Lower leg skin (tissue), 4 donors: ENCODE measurements at regions of chr3 and their contacts with region 1.

Region 1: DNA sequence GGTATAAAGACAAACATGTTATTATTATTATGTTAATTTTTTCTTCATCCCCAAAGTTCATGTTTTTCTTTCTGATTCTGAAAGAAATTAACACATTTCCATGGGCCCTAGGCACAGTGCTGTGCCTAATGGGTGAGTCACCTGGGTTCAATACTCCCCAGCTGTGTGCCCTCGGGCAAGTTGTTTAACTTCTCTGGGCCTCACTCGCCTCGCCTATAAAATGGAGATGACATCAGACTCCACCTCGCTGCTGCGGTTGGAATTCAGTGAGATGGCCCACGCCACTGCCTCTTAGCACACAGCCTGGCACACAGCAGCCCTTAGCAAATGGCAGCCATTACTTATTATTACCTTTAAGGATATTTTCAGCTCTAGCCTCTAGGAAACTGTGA is 22.6 kb downstream of the DNASE1L3 start:
- DNase-seq: no peak
- H3K4me3 ChIP-seq: no peak overlapping the region
- CTCF ChIP-seq: no peak
- POLR2A ChIP-seq: no peak

Region 2: GRCh38 chr3:56207922-56208321 is 1980.2 kb before region 1 on chr3:
- intact Hi-C with region 1: no loop called
- DNase-seq: no peak
- H3K4me3 ChIP-seq: no peak overlapping the region
- CTCF ChIP-seq: no peak
- POLR2A ChIP-seq: no peak

Region 3: DNA sequence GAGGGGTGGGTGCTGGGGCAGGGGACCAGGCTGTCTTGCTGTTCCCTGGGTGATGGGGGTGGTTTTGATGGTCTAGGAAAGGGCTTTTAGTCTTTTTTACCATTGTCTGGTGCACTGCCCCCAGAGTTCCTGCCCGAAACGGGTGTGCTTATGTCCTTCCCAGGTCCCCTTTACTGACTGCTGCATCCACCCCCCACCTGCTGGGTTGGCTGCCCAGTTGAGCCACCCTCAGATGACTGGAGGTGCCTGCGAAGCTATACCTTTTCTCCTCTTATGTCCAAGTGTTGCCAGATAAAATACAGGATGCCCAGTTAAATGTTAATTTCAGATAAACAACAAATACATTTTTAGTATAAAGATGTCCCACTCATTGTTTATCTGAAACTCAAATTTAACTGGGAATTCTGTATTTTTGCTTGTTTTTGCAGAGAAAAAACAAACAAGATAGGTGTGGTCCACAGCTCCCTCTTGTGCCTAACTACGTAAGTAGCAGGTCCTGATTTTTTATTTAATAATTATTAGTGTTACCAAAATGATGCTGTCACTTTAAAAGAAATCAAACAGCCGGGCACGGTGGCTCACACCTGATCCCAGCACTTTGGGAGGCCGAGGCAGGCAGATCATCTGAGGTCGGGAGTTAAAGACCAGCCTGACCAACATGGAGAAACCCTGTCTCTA is 111.8 kb after region 1 on chr3:
- intact Hi-C with region 1: loop called (anchors 2 kb)
- DNase-seq: no peak
- H3K4me3 ChIP-seq: no peak overlapping the region
- CTCF ChIP-seq: no peak
- POLR2A ChIP-seq: no peak